Panc1 (cell line): ENCODE measurements at regions of chr9 and their contacts with region 1.

Region 1: GRCh38 chr9:21326526-21327139 is 8.6 kb downstream of the KLHL9 start:
- DNase-seq: no peak
- ATAC-seq: no peak
- H3K4me3 ChIP-seq: no peak overlapping the region
- H3K27ac ChIP-seq: no peak overlapping the region
- H3K4me1 ChIP-seq: no peaks in the 10 kb centered on the region
- H3K27me3 ChIP-seq: no peaks in the 10 kb centered on the region
- CTCF ChIP-seq: peak; percentile 43; the same call in 1 of the 2 replicates

Region 2: GRCh38 chr9:21395778-21396717 is 69.4 kb after region 1 on chr9:
- CTCF ChIA-PET with region 1: interaction called, 14 read pairs
- POLR2A ChIA-PET with region 1: interaction called, 5 read pairs
- in situ Hi-C with region 1: no loop called
- intact Hi-C with region 1: loop called (anchors 5 kb)
- DNase-seq: no peak
- ATAC-seq: peak; percentile 90
- H3K4me3 ChIP-seq: peak overlapping the region; percentile 48 to 55
- H3K27ac ChIP-seq: no peak overlapping the region
- H3K4me1 ChIP-seq: no peaks in the 10 kb centered on the region
- H3K27me3 ChIP-seq: no peaks in the 10 kb centered on the region
- CTCF ChIP-seq: peak; percentile 79

Region 3: DNA sequence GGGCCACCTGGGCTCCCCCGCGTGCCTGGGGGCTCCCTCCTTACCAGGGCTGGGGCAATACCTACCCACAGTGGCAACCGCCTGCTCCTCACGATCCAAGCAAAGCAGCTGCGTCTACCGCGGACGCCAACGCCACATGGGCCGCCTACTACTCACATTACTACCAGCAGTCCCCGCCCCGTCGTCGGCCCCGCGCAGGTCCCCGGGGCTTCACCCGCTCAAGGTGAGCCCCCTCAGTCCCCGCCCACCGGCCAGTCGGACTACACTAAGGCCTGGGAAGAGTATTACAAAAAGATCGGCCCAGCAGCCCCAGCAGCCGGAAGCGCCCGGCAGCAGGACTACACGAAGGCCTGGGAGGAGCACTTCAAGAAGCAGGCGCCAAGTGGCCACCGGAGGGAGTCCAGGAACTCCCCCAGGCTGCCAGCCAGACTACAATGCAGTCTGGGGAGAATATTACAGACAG is 369.8 kb after region 1 on chr9:
- CTCF ChIA-PET with region 1: no interaction called
- POLR2A ChIA-PET with region 1: no interaction called
- in situ Hi-C with region 1: no loop called
- intact Hi-C with region 1: no loop called
- DNase-seq: no peak
- ATAC-seq: peak; percentile 38; the same call in 1 of the 2 replicates
- H3K4me3 ChIP-seq: no peak overlapping the region
- H3K27ac ChIP-seq: no peak overlapping the region
- H3K4me1 ChIP-seq: peaks cover 5% of the 10 kb centered on the region
- H3K27me3 ChIP-seq: no peaks in the 10 kb centered on the region
- CTCF ChIP-seq: no peak